OCI-LY7 (cell line): ENCODE measurements at regions of chr4 and their contacts with region 1.

Region 1: GRCh38 chr4:98275145-98275544 is 14.0 kb downstream of the RAP1GDS1 start:
- DNase-seq: no peak
- H3K4me3 ChIP-seq: no peak overlapping the region
- H3K27ac ChIP-seq: no peak overlapping the region
- H3K4me1 ChIP-seq: no peaks in the 10 kb centered on the region
- CTCF ChIP-seq: no peak

Region 2: GRCh38 chr4:98289375-98289774 is 14.2 kb after region 1 on chr4:
- CTCF ChIA-PET with region 1: no interaction called
- POLR2A ChIA-PET with region 1: interaction called, 17 read pairs
- intact Hi-C with region 1: no loop called
- DNase-seq: no peak
- H3K4me3 ChIP-seq: peak overlapping the region; percentile 59
- H3K27ac ChIP-seq: peak overlapping the region; percentile 92
- H3K4me1 ChIP-seq: peaks cover 69% of the 10 kb centered on the region
- CTCF ChIP-seq: no peak

Region 3: DNA sequence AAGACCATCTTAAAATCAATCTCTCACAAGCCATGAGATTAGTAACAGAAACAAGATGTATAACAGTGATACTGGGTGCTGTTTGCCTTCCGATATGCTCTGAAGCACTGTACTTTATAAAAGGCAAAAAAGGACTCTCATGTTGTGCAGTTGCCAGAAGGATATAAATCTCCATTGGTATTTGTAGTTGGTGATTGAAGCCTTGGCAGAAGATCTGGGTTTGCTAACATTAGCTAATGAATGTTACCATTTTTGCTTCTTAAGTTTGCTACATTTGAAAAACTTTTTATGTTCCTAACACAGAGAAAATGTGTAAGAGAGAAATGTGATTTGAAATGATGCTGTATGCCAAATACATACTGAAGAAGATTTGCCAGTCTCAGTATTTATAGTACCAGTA is 30.4 kb after region 1 on chr4:
- CTCF ChIA-PET with region 1: no interaction called
- POLR2A ChIA-PET with region 1: no interaction called
- intact Hi-C with region 1: no loop called
- DNase-seq: no peak
- H3K4me3 ChIP-seq: no peak overlapping the region
- H3K27ac ChIP-seq: no peak overlapping the region
- H3K4me1 ChIP-seq: no peaks in the 10 kb centered on the region
- CTCF ChIP-seq: no peak

Region 4: DNA sequence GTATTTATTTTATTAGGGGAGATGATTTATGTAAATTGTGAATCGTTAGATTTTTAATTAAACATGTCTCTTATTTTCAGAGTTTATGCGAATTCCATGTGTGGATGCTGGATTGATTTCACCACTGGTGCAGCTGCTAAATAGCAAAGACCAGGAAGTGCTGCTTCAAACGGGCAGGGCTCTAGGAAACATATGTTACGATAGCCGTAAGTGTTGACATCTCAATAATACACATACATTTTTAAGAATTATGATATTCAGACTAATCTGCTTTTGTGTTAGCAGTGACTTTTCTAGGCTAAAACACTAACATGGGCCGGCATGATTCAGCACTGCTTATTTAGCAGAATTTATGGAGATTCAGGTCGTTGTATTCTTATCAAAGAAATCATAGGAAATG is 77.3 kb after region 1 on chr4:
- CTCF ChIA-PET with region 1: no interaction called
- POLR2A ChIA-PET with region 1: no interaction called
- intact Hi-C with region 1: no loop called
- DNase-seq: no peak
- H3K4me3 ChIP-seq: no peak overlapping the region
- H3K27ac ChIP-seq: no peak overlapping the region
- H3K4me1 ChIP-seq: no peaks in the 10 kb centered on the region
- CTCF ChIP-seq: no peak

Region 5: DNA sequence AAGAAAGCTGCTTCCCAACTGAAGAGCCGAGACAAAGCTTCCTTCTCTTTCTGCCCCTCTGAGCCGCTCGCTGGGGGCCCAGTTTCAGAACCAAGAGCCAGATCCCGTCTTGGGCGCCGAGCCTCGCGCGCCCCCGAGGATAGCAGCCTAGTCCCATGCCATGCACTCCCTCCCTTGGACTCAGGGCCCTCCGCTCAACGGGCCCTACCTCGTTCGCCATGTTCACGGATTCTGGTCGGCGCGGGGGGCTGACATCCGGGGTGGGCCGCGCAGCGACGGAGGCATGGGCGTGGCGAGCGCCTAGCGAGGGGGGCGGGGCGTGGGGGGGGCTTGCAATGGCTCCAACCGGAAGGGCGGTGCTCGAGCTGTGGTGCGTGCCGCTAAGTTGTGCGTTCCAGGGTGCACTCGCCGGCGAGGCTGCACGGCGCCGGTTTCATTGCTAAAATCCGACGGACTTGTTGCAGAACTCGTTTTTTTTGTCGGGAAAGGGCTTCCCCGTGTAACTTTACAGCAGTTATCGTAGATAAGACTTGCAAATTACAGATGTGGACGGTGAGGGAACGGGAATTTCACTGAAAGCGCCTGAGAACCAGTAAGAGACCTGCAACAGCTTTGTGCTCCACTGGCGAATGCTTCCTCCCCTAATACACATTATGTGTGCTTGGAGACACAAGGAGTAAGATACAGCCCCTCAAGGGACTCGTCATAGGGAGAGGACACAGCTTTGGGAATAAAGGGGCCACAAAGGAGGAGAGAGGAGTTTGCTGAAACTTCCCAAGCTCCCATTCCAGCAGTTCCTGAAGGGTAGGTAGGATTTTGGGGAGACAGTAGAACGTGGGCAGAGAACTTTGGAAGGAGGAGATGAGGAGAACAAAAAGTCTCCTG is 813.6 kb after region 1 on chr4 and contains the start of gene ADH5:
- CTCF ChIA-PET with region 1: no interaction called
- POLR2A ChIA-PET with region 1: no interaction called
- intact Hi-C with region 1: no loop called
- DNase-seq: peak; percentile 93
- H3K4me3 ChIP-seq: peak within 1 kb of the TSS; percentile 75
- H3K27ac ChIP-seq: peak within 1 kb of the TSS; percentile 50
- H3K4me1 ChIP-seq: peaks cover 23% of the 10 kb centered on the region
- CTCF ChIP-seq: no peak
- total RNA-seq, gene ADH5: 50.0 and 62.6 TPM in 2 replicates